ENCODE measurements at regions of chr22 and their contacts with region 1.

Region 1: GRCh38 chr22:31211862-31212730 is at the start of gene LIMK2:
- H3K4me3 ChIP-seq: peak within 1 kb of the TSS; percentile 92
- H3K27ac ChIP-seq: peak within 1 kb of the TSS; percentile 65; the same call in 1 of the 2 replicates
- H3K4me1 ChIP-seq: 0 out of 2 replicates have a peak, but pooled peaks cover 4% of the 10 kb centered on the region
- CTCF ChIP-seq: peak; percentile 91

Region 2: DNA sequence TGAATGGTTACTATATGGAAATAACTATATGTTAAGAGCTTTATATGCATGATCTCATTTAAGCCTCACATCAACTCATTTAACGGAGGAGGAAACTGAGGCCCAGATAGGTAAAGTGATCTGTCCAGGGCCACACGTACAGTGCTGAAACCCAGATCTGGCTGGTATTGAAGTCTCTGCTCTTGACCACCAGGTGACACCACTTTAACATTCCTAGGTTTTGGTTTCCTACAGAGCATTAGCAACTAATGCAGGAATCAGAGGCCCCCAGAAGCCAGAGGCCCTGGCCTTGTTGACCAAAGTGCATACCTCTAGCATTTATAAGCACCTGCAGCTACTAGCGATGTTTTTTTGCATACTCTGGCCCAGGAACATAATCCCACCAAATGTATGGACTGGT is 12.9 kb before region 1 on chr22:
- CTCF ChIA-PET with region 1: interaction called, 50 read pairs
- POLR2A ChIA-PET with region 1: interaction called, 8 read pairs
- H3K4me3 ChIP-seq: no peak overlapping the region
- H3K27ac ChIP-seq: no peak overlapping the region
- H3K4me1 ChIP-seq: no peaks in the 10 kb centered on the region
- CTCF ChIP-seq: 0 out of 2 replicates have a peak, but pooled peaks have one; percentile 17

Region 3: GRCh38 chr22:31230871-31231621 is 18.9 kb after region 1 on chr22:
- CTCF ChIA-PET with region 1: interaction called, 70 read pairs
- POLR2A ChIA-PET with region 1: interaction called, 3 read pairs
- H3K4me3 ChIP-seq: no peak overlapping the region
- H3K27ac ChIP-seq: no peak overlapping the region
- H3K4me1 ChIP-seq: no peaks in the 10 kb centered on the region
- CTCF ChIP-seq: peak; percentile 86

Region 4: DNA sequence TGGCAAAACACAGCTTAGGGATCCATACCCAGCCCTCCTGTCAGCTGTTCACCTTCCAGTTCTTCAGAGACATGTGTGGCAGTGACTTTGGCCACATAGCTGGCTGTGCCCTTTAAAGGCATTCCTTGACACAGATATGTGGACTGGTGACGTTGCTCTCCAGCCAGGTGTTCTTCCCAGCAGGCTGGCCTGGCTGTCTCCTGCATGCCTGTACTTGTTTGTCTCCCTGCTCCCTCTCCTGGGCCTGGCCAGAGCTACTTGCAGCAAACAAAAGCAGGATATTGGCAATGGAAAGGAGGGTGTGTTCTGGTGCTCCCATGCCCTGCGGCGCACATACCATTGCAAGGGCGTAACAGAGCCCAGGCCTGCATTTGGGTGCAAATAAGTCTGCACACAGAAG is 41.9 kb after region 1 on chr22:
- CTCF ChIA-PET with region 1: interaction called, 31 read pairs
- POLR2A ChIA-PET with region 1: no interaction called
- H3K4me3 ChIP-seq: no peak overlapping the region
- H3K27ac ChIP-seq: no peak overlapping the region; the same call in 1 of the 2 replicates
- H3K4me1 ChIP-seq: no peaks in the 10 kb centered on the region
- CTCF ChIP-seq: no peak

Region 5: DNA sequence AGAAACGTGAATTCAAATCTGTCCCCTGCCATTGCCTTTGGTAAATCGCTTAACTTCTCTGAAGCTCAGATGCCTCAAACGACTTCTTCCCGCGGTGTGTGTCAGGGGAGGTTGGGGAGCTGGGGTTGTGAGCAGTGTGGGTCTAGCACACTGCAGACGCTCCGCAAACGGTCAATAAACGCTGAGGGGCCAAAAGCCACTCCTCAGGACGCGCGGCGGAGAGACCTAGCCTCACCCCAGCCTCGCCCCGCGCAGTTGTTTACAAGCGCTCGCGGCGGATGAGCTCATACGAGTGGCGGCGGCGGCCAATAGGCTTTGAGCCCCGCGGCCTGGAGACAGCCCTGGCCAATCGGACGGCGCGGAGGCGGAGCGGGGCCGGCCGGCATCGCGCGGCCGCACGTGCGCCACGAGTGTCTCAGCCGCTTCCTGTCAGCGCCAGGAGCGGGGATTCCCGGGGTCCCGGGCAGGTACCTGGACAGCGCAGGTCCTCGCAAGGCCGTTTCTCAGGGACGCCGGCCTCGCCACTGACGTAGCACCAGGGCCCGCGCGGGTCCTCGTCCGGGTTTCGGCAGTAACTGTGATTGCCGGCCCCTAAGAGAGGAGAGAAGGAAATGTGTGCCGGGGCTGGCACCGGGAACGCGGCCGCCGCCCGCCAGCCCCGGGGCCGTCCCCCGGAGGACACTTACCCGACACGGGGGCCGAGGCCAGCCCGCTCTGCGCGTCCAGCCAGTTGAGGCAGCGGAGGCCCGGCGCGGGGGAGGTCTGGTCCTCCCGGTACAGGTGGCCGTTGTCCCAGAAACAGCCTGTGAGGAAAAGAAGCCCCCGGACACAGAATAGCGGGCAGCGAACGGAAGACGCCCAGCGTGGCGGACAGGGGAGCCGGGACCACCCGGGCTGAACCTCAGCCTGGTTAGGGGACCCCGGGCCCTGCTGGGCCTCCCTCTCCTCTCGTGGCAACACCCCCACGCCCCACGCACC is 78.7 kb after region 1 on chr22:
- CTCF ChIA-PET with region 1: interaction called, 13 read pairs
- POLR2A ChIA-PET with region 1: interaction called, 9 read pairs
- H3K4me3 ChIP-seq: peak overlapping the region; percentile 50
- H3K27ac ChIP-seq: peak overlapping the region; percentile 54; the same call in 1 of the 2 replicates
- H3K4me1 ChIP-seq: peaks cover 11% of the 10 kb centered on the region; the same call in 1 of the 2 replicates
- CTCF ChIP-seq: no peak